Testis (tissue), 5 donors: ENCODE measurements at regions of chrX and their contacts with region 1.

Region 1: GRCh38 chrX:68822641-68823410 is 6.0 kb upstream of the EFNB1 start:
- DNase-seq: peak; percentile 54
- H3K4me3 ChIP-seq: no peak overlapping the region
- H3K27ac ChIP-seq: no peak overlapping the region
- H3K4me1 ChIP-seq: no peaks in the 10 kb centered on the region
- H3K27me3 ChIP-seq: no peaks in the 10 kb centered on the region
- CTCF ChIP-seq: peak; percentile 14 to 42 (median 41)
- POLR2A ChIP-seq: no peak

Region 2: DNA sequence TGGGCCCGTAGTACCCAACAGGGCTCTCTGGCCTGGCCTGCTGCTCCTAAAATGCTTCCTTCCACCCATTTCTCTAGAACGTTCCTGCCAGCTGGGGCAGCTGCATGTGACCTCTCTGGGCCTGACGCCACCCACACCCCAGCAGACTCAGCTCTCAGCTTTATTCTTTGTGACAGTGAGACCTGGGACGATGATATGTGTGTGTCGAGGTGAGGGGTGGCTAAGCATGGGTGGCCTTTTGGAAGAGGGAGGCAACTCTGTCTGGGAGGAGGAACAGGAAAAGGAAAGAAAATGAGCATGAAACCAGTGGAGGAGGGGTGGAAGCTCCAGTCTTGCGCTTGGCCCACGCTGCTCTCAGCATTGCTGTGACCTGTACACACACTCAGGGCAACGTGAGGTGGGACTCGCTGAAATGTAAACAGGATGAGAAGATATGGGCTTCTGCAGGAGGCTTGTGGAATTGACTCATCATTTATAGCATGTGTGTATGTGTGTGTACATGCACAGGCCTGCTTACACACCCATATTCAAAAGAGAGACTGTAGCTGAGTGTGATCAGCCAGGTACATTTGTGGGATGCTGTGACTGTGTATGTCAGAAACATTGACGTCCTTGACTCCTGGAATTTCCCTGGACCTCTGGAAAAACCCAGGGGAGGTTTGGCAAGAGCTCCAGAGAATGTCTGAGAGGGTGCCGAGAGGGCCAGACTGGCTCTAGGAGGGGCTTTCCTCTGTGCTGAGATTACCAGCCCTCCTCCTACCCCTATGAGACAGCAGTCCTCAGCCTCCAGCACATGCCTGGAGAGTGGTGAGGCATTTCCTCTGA is 204.6 kb after region 1 on chrX:
- intact Hi-C with region 1: no loop called
- DNase-seq: no peak
- H3K4me3 ChIP-seq: no peak overlapping the region
- H3K27ac ChIP-seq: no peak overlapping the region
- H3K4me1 ChIP-seq: peaks cover 5% of the 10 kb centered on the region
- H3K27me3 ChIP-seq: no peaks in the 10 kb centered on the region
- CTCF ChIP-seq: no peak
- POLR2A ChIP-seq: no peak

Region 3: DNA sequence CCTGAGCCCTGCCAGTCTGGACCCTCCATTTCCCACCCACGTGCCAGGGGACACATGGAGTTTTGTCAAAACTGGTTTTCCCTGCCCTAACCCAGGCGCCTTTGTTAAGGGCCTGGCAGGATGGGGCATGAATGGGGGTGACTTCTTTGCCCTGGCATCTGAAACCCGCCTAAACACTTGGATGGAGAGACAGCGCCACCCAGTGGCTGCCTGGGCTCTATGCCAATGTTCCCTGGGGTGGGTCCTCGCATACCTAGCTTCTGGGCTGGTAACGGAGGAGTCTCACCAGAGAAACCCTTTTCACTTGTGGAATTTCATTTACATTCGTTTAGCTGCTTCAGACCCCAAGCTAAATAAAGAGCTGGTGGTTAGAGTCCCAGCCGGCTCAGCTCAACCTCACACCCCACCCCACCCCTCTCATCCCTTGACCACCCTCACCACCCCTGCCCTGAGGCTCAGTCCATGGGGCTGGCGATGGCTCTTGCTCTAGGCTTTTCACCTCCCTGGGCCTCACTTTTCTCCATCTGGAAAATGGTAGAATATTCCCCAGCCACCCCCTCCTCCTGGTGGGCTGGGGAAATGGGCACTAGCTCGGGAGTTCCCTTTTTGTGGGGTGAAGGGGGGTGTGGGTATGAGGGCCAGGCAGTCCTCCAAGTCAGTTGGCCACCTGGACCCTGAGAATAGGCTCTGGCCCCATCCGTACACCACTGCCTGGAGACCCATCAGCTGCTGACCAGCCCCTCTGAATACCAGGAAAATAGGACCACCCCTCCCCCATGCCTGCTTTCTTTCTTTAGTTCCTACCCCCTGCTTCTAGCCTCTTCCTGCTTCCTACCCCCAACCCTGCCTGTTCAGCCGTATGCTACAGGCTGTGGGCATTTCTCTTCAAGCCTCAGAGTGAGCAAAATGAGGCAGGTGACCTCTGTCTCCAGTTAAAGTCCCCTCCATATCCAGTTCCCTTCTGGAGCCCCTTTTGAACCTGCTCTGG is 399.6 kb after region 1 on chrX:
- intact Hi-C with region 1: loop called (anchors 5 kb)
- DNase-seq: peak; percentile 79
- H3K4me3 ChIP-seq: no peak overlapping the region
- H3K27ac ChIP-seq: no peak overlapping the region
- H3K4me1 ChIP-seq: no peaks in the 10 kb centered on the region
- H3K27me3 ChIP-seq: no peaks in the 10 kb centered on the region
- CTCF ChIP-seq: peak; percentile 70 to 78 (median 73)
- POLR2A ChIP-seq: no peak

Region 4: GRCh38 chrX:69285881-69286564 is 463.2 kb after region 1 on chrX:
- intact Hi-C with region 1: loop called (anchors 5 kb)
- DNase-seq: peak; percentile 73
- H3K4me3 ChIP-seq: peak overlapping the region; percentile 19 to 43
- H3K27ac ChIP-seq: no peak overlapping the region
- H3K4me1 ChIP-seq: no peaks in the 10 kb centered on the region
- H3K27me3 ChIP-seq: no peaks in the 10 kb centered on the region
- CTCF ChIP-seq: peak; percentile 67 to 81 (median 71)
- POLR2A ChIP-seq: no peak